CD8-positive, alpha-beta T cell (primary cell): ENCODE measurements at regions of chr1 and their contacts with region 1.

Region 1: GRCh38 chr1:42462828-42463763 is at the start of gene CCDC30:
- DNase-seq: peak; percentile 92 to 99 (median 94)
- ATAC-seq: peak; percentile 98
- H3K4me3 ChIP-seq: peak within 1 kb of the TSS; percentile 60 to 62
- H3K4me3 Mint-ChIP-seq: peak within 1 kb of the TSS; percentile 84
- H3K27ac ChIP-seq: peak within 1 kb of the TSS; percentile 70 to 83
- H3K27ac Mint-ChIP-seq: peak within 1 kb of the TSS; percentile 93
- H3K4me1 ChIP-seq: peaks cover 23% of the 10 kb centered on the region
- H3K4me1 Mint-ChIP-seq: peaks cover 40% of the 10 kb centered on the region
- H3K27me3 ChIP-seq: no peaks in the 10 kb centered on the region
- H3K27me3 Mint-ChIP-seq: no peaks in the 10 kb centered on the region
- CTCF ChIP-seq: no peak
- total RNA-seq, gene CCDC30: 2.5 to 2.8 TPM

Region 2: DNA sequence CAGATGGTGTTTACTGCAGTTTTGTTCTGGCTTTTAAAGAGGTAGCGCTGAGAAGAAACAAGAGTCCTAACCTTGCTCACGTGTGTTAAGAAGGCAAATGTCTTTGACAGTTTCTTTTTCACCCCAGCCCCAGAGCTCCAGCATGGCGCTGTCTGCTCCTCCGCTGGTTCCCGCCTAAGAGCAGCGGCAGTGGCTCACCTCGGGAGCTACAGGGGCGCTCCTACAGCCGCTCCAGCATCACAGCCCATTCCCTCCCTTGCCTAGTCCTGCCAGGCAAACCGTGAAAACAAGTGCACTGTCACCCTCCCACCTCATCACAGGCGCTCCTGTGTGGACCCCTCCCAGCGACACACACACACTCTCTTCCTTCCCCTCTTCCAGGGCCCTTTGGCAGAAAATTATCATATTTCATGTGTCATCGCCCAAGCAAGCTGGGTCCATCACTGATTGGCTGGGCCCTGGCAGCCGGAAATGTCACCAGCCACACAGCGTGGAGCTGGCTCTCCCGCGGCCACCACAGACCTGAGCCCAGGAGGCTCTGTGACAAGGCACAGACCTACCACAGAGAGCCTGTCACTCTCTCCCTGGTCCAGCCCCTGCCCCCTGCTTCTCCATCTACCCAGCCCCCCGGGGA is 543.2 kb before region 1 on chr1:
- CTCF ChIA-PET with region 1: no interaction called
- POLR2A ChIA-PET with region 1: interaction called, 4 read pairs
- intact Hi-C with region 1: loop called in 1 of 2 experiments (anchors 10 kb)
- DNase-seq: peak; percentile 39 to 90 (median 77)
- ATAC-seq: peak; percentile 81
- H3K4me3 ChIP-seq: peak overlapping the region; percentile 51 to 57
- H3K4me3 Mint-ChIP-seq: peak overlapping the region; percentile 95
- H3K27ac ChIP-seq: peak overlapping the region; percentile 56 to 74
- H3K27ac Mint-ChIP-seq: peak overlapping the region; percentile 98
- H3K4me1 ChIP-seq: peaks cover 43% of the 10 kb centered on the region
- H3K4me1 Mint-ChIP-seq: peaks cover 58% of the 10 kb centered on the region
- H3K27me3 ChIP-seq: no peaks in the 10 kb centered on the region
- H3K27me3 Mint-ChIP-seq: no peaks in the 10 kb centered on the region
- CTCF ChIP-seq: no peak

Region 3: GRCh38 chr1:42146626-42147320 is 316.3 kb before region 1 on chr1:
- CTCF ChIA-PET with region 1: no interaction called
- POLR2A ChIA-PET with region 1: no interaction called
- intact Hi-C with region 1: no loop called
- DNase-seq: peak; percentile 25 to 76 (median 66)
- ATAC-seq: peak; percentile 78
- H3K4me3 ChIP-seq: no peak overlapping the region
- H3K4me3 Mint-ChIP-seq: no peak overlapping the region
- H3K27ac ChIP-seq: no peak overlapping the region
- H3K27ac Mint-ChIP-seq: no peak overlapping the region
- H3K4me1 ChIP-seq: no peaks in the 10 kb centered on the region
- H3K4me1 Mint-ChIP-seq: peaks cover 6% of the 10 kb centered on the region
- H3K27me3 ChIP-seq: peaks cover 0 to 8% of the 10 kb centered on the region in 2 experiments
- H3K27me3 Mint-ChIP-seq: peaks cover 21% of the 10 kb centered on the region
- CTCF ChIP-seq: peak; percentile 73

Region 4: DNA sequence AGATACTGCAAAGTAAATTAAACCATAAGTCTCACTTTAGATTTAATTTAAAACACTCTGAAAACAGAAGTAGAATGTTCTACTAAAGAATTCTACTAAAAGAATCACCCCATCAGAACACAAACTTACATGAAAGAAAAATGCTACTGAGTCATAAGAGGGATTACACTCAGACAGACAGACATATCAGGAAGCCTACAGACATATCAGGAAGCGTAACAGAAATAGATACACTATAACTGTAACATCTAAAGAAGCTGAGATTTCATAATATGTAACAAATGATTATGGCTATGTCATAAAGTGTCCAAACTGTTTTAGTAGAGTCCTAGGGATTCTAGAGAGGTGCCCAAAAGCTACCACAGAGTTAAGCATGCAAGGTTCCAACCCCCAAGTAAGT is 152.0 kb before region 1 on chr1:
- CTCF ChIA-PET with region 1: interaction called, 4 read pairs
- POLR2A ChIA-PET with region 1: interaction called, 6 read pairs
- intact Hi-C with region 1: loop called in 1 of 2 experiments (anchors 5 kb)
- DNase-seq: no peak
- ATAC-seq: no peak
- H3K4me3 ChIP-seq: no peak overlapping the region
- H3K4me3 Mint-ChIP-seq: no peak overlapping the region
- H3K27ac ChIP-seq: no peak overlapping the region
- H3K27ac Mint-ChIP-seq: no peak overlapping the region
- H3K4me1 ChIP-seq: peaks cover 35% of the 10 kb centered on the region
- H3K4me1 Mint-ChIP-seq: peaks cover 76% of the 10 kb centered on the region
- H3K27me3 ChIP-seq: no peaks in the 10 kb centered on the region
- H3K27me3 Mint-ChIP-seq: no peaks in the 10 kb centered on the region
- CTCF ChIP-seq: no peak

Region 5: DNA sequence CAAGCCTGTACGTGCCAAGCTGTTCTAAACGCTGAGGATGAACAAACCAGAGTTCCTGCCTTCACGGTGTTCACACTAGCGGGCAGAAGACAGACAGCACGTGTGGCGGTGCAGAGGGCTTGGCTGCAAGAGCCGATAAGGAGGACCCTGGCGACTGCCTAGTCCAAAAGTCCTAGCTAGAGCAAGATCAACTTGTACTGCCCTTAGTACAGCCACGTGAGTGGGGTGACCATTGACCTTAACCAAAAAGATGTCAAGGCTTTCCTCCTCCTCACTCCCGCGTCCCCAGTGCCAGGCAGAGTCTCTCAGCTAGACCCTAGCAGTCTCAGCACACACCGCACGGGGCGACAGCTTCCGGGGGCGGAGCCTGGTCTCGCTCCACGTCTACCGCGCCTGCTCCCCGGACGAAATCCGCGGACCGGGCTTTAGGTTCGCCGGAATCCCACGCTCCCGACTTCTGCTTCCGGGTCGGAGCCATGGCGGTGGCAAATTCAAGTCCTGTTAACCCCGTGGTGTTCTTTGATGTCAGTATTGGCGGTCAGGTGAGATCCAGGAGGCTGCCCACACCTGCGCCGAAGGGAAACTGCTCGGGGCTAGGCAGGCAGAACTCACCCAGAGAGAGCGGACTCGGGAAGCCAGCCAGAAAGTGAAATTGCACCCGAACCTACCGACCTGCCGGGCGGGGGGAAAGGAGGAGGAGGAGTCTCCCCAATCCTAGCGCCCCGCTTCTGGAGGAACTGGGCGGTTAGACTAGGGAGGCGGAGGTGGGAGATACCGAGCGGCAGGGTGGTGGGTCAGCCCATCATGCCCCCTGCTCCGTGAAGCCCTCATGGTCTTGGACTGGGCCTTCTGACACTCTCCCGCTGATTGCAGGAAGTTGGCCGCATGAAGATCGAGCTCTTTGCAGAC is 195.1 kb after region 1 on chr1 and contains the start of gene PPIH:
- CTCF ChIA-PET with region 1: no interaction called
- POLR2A ChIA-PET with region 1: no interaction called
- intact Hi-C with region 1: loop called (anchors 1 kb)
- DNase-seq: peak; percentile 87 to 97 (median 95)
- ATAC-seq: peak; percentile 98
- H3K4me3 ChIP-seq: peak within 1 kb of the TSS; percentile 78 to 90
- H3K4me3 Mint-ChIP-seq: peak within 1 kb of the TSS; percentile 99
- H3K27ac ChIP-seq: peak within 1 kb of the TSS; percentile 54 to 81
- H3K27ac Mint-ChIP-seq: peak within 1 kb of the TSS; percentile 87
- H3K4me1 ChIP-seq: peaks cover 24% of the 10 kb centered on the region
- H3K4me1 Mint-ChIP-seq: peaks cover 45% of the 10 kb centered on the region
- H3K27me3 ChIP-seq: no peaks in the 10 kb centered on the region
- H3K27me3 Mint-ChIP-seq: no peaks in the 10 kb centered on the region
- CTCF ChIP-seq: no peak
- total RNA-seq, gene PPIH: 31.0 to 33.2 TPM

Region 6: GRCh38 chr1:42681741-42682483 is 218.8 kb after region 1 on chr1 and contains the start of gene YBX1:
- CTCF ChIA-PET with region 1: no interaction called
- POLR2A ChIA-PET with region 1: interaction called, 3 read pairs
- intact Hi-C with region 1: loop called in 1 of 2 experiments (anchors 1 kb)
- DNase-seq: peak; percentile 88 to 98 (median 95)
- ATAC-seq: peak; percentile 89
- H3K4me3 ChIP-seq: peak within 1 kb of the TSS; percentile 81 to 84
- H3K4me3 Mint-ChIP-seq: peak within 1 kb of the TSS; percentile 99
- H3K27ac ChIP-seq: peak within 1 kb of the TSS; percentile 82 to 88
- H3K27ac Mint-ChIP-seq: peak within 1 kb of the TSS; percentile 97
- H3K4me1 ChIP-seq: peaks cover 43% of the 10 kb centered on the region
- H3K4me1 Mint-ChIP-seq: peaks cover 58% of the 10 kb centered on the region
- H3K27me3 ChIP-seq: no peaks in the 10 kb centered on the region
- H3K27me3 Mint-ChIP-seq: no peaks in the 10 kb centered on the region
- CTCF ChIP-seq: no peak
- total RNA-seq, gene YBX1: 440 to 450 TPM